ENCODE measurements at regions of chr3 and their contacts with region 1.

Region 1: GRCh38 chr3:130111185-130111864 is 29.7 kb downstream of the ALG1L2 start:
- DNase-seq: peak; percentile 99
- H3K4me3 Mint-ChIP-seq: peak overlapping the region; percentile 94
- H3K27ac Mint-ChIP-seq: peak overlapping the region; percentile 98
- H3K4me1 Mint-ChIP-seq: peaks cover 21% of the 10 kb centered on the region
- H3K27me3 Mint-ChIP-seq: peaks cover 8% of the 10 kb centered on the region

Region 2: DNA sequence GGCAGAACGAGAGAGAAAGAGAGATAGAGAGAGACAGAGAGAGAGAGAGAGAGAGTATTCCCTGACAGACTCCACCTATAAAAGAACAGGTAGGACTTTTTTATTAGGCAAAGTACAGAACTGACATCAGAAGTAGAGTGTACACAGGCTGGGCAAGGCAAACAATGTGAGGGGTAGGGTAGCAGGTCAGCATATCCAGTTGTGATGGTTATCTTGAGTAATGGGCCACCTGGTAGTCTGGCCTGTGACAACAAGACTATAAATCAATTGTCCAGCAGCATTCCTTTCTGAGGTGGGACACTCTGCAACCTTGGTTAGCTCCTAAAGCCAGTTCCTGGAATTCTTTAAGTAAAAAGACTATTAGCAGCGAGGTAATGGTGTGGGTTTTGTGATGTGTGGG is 202.9 kb before region 1 on chr3:
- CTCF ChIA-PET with region 1: no interaction called
- POLR2A ChIA-PET with region 1: no interaction called
- DNase-seq: no peak
- H3K4me3 Mint-ChIP-seq: no peak overlapping the region
- H3K27ac Mint-ChIP-seq: no peak overlapping the region
- H3K4me1 Mint-ChIP-seq: no peaks in the 10 kb centered on the region
- H3K27me3 Mint-ChIP-seq: no peaks in the 10 kb centered on the region

Region 3: DNA sequence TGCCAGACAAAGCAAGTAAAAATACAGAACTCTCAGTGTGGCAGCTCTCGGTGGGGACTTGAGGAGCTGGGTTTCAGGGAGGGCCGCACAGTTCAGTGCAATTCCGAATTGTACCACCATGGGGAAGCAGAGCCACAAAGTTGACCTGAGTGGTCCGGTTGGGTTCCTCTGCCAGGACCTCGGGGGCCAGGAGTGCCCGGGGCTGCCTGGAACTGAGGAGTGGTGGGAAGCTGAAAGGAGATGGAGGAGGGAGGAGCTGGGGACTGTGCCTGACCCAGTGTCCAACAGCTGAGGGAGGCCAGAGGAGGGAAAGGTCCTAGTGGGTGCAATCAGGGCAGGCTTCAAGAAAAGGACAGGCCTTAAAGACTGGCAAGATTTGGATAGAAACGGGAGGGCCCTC is 169.0 kb before region 1 on chr3:
- CTCF ChIA-PET with region 1: interaction called, 18 read pairs
- POLR2A ChIA-PET with region 1: no interaction called
- DNase-seq: peak; percentile 36
- H3K4me3 Mint-ChIP-seq: no peak overlapping the region
- H3K27ac Mint-ChIP-seq: no peak overlapping the region
- H3K4me1 Mint-ChIP-seq: peaks cover 12% of the 10 kb centered on the region
- H3K27me3 Mint-ChIP-seq: peaks cover 8% of the 10 kb centered on the region

Region 4: GRCh38 chr3:130048726-130049125 is 62.6 kb before region 1 on chr3:
- CTCF ChIA-PET with region 1: no interaction called
- POLR2A ChIA-PET with region 1: no interaction called
- DNase-seq: no peak
- H3K4me3 Mint-ChIP-seq: no peak overlapping the region
- H3K27ac Mint-ChIP-seq: no peak overlapping the region
- H3K4me1 Mint-ChIP-seq: no peaks in the 10 kb centered on the region
- H3K27me3 Mint-ChIP-seq: no peaks in the 10 kb centered on the region

Region 5: GRCh38 chr3:130242850-130243569 is 131.7 kb after region 1 on chr3:
- CTCF ChIA-PET with region 1: no interaction called
- POLR2A ChIA-PET with region 1: no interaction called
- DNase-seq: no peak
- H3K4me3 Mint-ChIP-seq: no peak overlapping the region
- H3K27ac Mint-ChIP-seq: no peak overlapping the region
- H3K4me1 Mint-ChIP-seq: no peaks in the 10 kb centered on the region
- H3K27me3 Mint-ChIP-seq: peaks cover 7% of the 10 kb centered on the region